ENCODE measurements at regions of chr12 and their contacts with region 1.

Region 1: DNA sequence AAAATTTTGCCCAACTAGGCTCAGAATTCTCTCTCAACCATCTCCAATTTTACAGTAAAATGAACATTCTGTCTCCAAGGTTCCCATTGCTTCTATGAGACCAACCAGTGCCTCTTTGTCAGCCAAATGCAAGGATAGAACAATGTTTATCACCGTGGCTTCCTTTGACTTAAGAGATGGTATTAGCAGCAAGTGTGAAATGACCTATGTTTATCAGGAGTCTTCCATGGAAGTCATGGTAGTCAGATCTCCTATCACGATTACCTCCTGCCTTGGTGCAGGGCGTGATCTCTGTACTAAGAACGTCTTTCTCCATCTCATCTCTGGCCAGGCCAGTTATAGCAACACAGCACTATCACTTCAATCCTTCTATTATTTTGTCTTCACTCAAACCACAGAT is 6.1 kb upstream of the BCL2L14 start:
- DNase-seq: no peak
- ATAC-seq: no peak
- H3K4me3 ChIP-seq: no peak overlapping the region
- H3K27ac ChIP-seq: no peak overlapping the region
- H3K4me1 ChIP-seq: no peaks in the 10 kb centered on the region
- H3K27me3 ChIP-seq: no peaks in the 10 kb centered on the region; a peak in 1 of 5 replicates
- CTCF ChIP-seq: no peak
- EP300 ChIP-seq: no peak
- POLR2A ChIP-seq: no peak
- RAD21 ChIP-seq: no peak

Region 2: DNA sequence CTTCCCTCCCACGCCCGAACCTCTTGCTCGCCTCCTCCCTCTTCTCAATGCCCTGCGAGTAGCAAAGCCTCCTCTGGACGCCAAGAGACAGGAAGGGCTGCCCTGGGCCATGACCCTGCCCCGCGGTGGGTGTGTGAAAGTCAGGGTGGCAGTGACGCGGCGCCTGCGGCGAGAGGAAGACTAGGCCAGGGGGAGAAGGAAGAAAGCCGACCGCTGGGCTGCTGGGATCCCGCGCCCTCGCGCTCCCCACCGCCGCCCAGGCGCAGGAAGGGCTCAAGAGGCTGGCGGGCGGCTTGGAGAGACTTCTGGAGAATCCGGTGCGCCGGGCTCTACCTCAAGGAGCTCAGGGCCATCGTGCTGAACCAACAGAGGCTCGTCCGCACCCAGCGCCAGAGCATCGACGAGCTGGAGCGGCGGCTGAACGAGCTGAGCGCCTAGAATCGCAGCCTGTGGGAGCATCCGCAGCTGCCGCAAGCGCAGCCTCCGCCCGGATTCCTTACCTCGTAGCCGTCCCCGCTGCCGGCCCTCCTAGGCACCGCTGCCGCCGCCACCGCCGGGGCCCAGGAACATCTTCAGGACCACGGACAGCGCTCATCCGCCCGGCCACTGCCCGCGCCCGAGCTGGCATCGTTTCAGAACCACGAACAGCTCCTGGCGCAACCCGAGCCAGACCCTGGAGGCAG is 564.3 kb before region 1 on chr12:
- CTCF ChIA-PET with region 1: no interaction called
- POLR2A ChIA-PET with region 1: no interaction called
- in situ Hi-C with region 1: no loop called
- intact Hi-C with region 1: no loop called
- DNase-seq: peak; percentile 33 to 64 (median 48)
- ATAC-seq: peak; percentile 67
- H3K4me3 ChIP-seq: no peak overlapping the region
- H3K27ac ChIP-seq: no peak overlapping the region
- H3K4me1 ChIP-seq: no peaks in the 10 kb centered on the region
- H3K27me3 ChIP-seq: no peaks in the 10 kb centered on the region
- CTCF ChIP-seq: no peak
- EP300 ChIP-seq: no peak
- POLR2A ChIP-seq: no peak
- RAD21 ChIP-seq: no peak

Region 3: GRCh38 chr12:12039897-12040296 is 24.7 kb before region 1 on chr12:
- CTCF ChIA-PET with region 1: no interaction called
- POLR2A ChIA-PET with region 1: no interaction called
- in situ Hi-C with region 1: no loop called
- intact Hi-C with region 1: loop called (anchors 2 kb)
- DNase-seq: no peak
- ATAC-seq: no peak
- H3K4me3 ChIP-seq: no peak overlapping the region
- H3K27ac ChIP-seq: no peak overlapping the region
- H3K4me1 ChIP-seq: no peaks in the 10 kb centered on the region
- H3K27me3 ChIP-seq: no peaks in the 10 kb centered on the region
- CTCF ChIP-seq: no peak
- EP300 ChIP-seq: no peak
- POLR2A ChIP-seq: no peak
- RAD21 ChIP-seq: no peak